CD4-positive, alpha-beta T cell (primary cell): ENCODE measurements at regions of chr19 and their contacts with region 1.

Region 1: DNA sequence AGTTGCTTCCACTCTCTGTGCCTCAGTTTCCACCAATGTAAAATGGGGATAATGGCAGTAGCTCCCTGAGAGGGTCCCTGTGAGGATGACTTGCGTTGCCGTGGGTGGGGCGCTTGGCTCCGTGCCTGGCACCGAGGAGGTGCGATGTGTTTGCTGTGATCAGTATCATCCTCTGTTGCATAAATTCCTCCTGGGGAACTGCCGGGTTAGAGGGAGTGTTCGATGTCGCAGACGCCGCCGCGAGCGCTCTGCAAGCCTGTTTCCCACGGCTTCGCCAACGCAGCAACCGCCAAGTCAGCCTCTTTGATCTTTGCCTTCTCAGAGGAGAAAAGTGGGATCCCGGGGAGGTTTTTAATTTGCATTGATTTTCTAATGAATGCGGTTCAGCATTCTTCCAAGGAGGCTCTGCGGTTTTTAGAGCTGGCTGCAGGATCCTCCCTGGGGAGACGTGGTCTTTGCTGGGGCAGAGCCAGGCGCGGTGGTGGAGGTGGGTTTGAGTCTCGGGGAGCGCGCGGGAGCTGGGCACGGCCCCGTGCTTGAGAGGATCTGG is 7.6 kb downstream of the GPR32 start:
- DNase-seq: no peak
- ATAC-seq: peak; percentile 44
- H3K4me3 ChIP-seq: no peak overlapping the region
- H3K4me3 Mint-ChIP-seq: no peak overlapping the region
- H3K27ac ChIP-seq: no peak overlapping the region
- H3K27ac Mint-ChIP-seq: no peak overlapping the region
- H3K4me1 ChIP-seq: peaks cover 6% of the 10 kb centered on the region
- H3K4me1 Mint-ChIP-seq: peaks cover 5% of the 10 kb centered on the region
- H3K27me3 ChIP-seq: peaks cover 50 to 72% of the 10 kb centered on the region in 2 experiments
- H3K27me3 Mint-ChIP-seq: peaks cover 87% of the 10 kb centered on the region
- CTCF ChIP-seq: no peak

Region 2: DNA sequence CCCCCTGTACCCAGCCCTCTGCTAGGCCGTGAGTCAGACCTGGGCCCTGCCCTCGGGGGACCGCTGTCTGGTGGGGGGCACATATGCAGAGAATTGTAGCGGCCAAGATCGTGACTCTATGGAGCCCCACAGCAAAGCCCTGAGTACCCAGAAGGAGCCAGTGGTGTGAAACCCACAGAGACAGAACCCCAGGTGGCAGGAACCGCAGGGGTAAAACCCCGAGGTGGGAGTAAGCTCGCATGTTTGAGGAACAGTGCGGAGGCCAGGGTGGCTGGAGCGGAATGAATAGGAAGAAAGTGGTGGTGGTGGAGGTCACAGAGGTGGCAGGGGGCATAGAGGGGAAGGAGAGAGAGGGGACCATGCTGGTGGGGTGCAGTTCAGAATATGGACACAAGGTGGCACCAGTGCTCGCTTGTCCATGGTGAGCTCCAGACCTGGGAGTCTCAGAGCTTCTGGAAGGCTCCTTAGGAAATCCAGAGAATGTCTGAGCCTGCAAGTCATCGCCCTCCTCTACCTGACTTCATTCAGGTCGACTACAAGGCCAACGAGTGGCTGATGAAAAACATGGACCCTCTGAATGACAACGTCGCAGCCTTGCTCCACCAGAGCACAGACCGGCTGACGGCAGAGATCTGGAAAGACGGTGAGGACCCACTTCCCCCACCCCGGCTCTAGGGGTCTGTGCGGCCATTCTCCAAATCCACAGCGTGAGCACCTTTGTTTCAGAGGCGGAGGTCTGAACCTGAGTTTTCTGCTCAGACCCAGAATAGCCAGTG is 525.5 kb before region 1 on chr19:
- CTCF ChIA-PET with region 1: no interaction called
- POLR2A ChIA-PET with region 1: no interaction called
- intact Hi-C with region 1: loop called in 1 of 2 experiments (anchors 5 kb)
- DNase-seq: peak in 12 of 14 experiments; percentile 2 to 50 (median 18)
- ATAC-seq: no peak
- H3K4me3 ChIP-seq: no peak overlapping the region
- H3K4me3 Mint-ChIP-seq: no peak overlapping the region
- H3K27ac ChIP-seq: no peak overlapping the region
- H3K27ac Mint-ChIP-seq: no peak overlapping the region
- H3K4me1 ChIP-seq: no peaks in the 10 kb centered on the region
- H3K4me1 Mint-ChIP-seq: no peaks in the 10 kb centered on the region
- H3K27me3 ChIP-seq: peaks cover 4 to 6% of the 10 kb centered on the region in 2 experiments
- H3K27me3 Mint-ChIP-seq: peaks cover 40% of the 10 kb centered on the region
- CTCF ChIP-seq: peak; percentile 57

Region 3: DNA sequence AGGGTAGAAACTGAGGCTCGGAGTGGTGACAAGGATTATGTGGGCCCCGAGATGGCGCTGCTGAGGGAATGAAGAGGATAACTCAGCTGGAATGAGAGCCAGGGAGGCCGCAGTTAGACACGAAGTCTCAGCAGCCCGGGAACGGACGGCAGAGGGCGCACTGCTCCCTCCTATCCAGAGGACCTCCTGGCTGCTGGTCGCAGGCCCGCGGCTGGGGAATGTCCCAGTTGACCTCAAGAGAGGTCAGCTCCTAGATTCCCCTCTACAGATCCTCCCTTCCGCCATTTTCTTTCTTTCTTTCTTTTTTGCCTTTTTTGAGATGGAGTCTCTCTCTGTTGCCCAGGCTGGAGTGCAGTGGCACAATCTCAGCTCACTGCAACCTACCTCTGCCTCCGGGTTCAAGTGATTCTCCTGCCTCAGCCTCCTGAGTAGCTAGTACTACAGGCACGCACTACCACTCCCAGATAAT is 240.0 kb before region 1 on chr19:
- CTCF ChIA-PET with region 1: interaction called, 3 read pairs
- POLR2A ChIA-PET with region 1: no interaction called
- intact Hi-C with region 1: loop called (anchors 1 kb)
- DNase-seq: peak; percentile 35 to 76 (median 50)
- ATAC-seq: peak; percentile 41
- H3K4me3 ChIP-seq: no peak overlapping the region
- H3K4me3 Mint-ChIP-seq: no peak overlapping the region
- H3K27ac ChIP-seq: no peak overlapping the region
- H3K27ac Mint-ChIP-seq: no peak overlapping the region
- H3K4me1 ChIP-seq: no peaks in the 10 kb centered on the region
- H3K4me1 Mint-ChIP-seq: no peaks in the 10 kb centered on the region
- H3K27me3 ChIP-seq: peaks cover 3 to 4% of the 10 kb centered on the region in 2 experiments
- H3K27me3 Mint-ChIP-seq: peaks cover 19% of the 10 kb centered on the region
- CTCF ChIP-seq: peak; percentile 76

Region 4: DNA sequence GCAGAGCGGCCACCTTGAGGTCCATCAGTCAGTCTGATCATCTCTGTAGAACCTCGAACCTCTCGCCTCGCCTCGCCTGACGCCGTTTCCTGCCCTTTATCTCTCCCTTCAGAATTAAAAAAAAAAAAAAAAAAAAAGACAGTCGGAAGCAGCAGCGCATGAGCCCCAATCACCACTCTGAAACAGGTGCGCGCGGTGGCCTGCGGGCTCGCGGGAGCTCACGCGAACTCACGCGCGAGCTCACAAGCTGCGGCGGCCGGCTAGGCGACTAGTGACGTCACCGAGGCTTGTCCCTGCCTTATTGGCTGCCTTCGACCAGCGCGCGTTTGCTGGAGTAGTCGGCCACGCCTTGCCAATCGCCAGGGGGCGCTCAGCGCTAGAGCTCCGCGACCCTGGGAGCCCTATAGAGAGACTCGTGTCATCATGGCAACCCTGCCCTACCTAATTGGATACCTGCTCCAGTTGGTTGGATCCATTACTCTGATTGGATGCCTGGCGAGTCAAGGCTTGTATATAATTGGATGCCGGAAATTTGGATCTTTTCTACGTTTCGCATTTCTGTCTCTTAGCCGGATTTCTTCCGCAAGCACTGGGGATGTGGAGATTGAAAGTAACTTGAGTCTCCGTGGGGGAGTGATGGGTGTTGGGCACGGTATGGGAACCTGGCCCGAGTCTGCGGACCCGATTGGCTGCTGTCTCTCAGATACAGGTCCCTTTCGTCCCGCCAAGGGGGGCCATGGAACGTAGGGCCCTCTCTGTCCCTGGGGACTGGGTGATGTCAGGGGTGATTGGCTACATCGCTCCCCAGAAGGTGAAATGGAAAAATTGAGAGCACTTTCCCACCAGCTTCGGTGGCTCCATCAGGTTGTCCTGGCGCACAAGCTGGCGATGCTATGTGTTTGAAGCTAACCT is 169.7 kb before region 1 on chr19:
- CTCF ChIA-PET with region 1: no interaction called
- POLR2A ChIA-PET with region 1: no interaction called
- intact Hi-C with region 1: loop called (anchors 2 kb)
- DNase-seq: peak; percentile 6 to 82 (median 58)
- ATAC-seq: peak; percentile 89
- H3K4me3 ChIP-seq: no peak overlapping the region
- H3K4me3 Mint-ChIP-seq: no peak overlapping the region
- H3K27ac ChIP-seq: no peak overlapping the region
- H3K27ac Mint-ChIP-seq: no peak overlapping the region
- H3K4me1 ChIP-seq: peaks cover 13% of the 10 kb centered on the region
- H3K4me1 Mint-ChIP-seq: peaks cover 10% of the 10 kb centered on the region
- H3K27me3 ChIP-seq: peaks cover 15% of the 10 kb centered on the region in 2 experiments
- H3K27me3 Mint-ChIP-seq: peaks cover 52% of the 10 kb centered on the region
- CTCF ChIP-seq: no peak

Region 5: DNA sequence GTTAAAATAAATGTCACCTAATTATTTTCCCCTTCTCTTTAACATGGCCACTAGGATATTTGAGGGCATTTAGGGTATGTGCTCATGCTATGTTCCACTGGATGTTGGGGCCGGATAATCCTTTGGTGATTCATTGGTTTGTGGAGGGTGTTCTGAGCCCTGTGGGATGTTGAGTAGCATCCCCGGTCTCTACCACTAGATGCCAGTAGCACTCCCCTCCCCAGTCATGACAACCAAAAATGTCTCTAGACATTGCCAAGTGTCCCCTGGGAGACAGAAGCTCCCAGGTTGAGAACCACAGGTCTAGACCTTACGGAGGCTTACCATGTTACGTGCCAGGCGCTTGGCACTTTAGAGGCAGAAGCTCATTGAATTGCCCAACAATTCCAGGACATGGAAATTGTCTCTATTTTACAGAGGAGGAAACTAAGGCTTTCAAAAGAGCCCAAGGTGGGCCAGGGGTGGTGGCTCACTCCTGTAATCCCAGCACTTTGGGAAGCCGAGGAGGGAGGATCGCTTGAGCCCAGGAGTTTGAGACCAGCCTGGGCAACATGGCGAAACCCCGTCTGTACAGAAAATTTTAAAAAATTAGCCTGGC is 72.3 kb before region 1 on chr19:
- CTCF ChIA-PET with region 1: no interaction called
- POLR2A ChIA-PET with region 1: no interaction called
- intact Hi-C with region 1: loop called (anchors 1 to 5 kb)
- DNase-seq: peak in 5 of 14 experiments; percentile 8 to 54 (median 34)
- ATAC-seq: peak; percentile 71
- H3K4me3 ChIP-seq: no peak overlapping the region
- H3K4me3 Mint-ChIP-seq: no peak overlapping the region
- H3K27ac ChIP-seq: no peak overlapping the region
- H3K27ac Mint-ChIP-seq: no peak overlapping the region
- H3K4me1 ChIP-seq: no peaks in the 10 kb centered on the region
- H3K4me1 Mint-ChIP-seq: no peaks in the 10 kb centered on the region
- H3K27me3 ChIP-seq: peaks cover 8 to 33% of the 10 kb centered on the region in 2 experiments
- H3K27me3 Mint-ChIP-seq: peaks cover 54% of the 10 kb centered on the region
- CTCF ChIP-seq: peak; percentile 42

Region 6: GRCh38 chr19:50724522-50725217 is 53.2 kb before region 1 on chr19:
- CTCF ChIA-PET with region 1: interaction called, 3 read pairs
- POLR2A ChIA-PET with region 1: no interaction called
- intact Hi-C with region 1: loop called (anchors 2 to 5 kb)
- DNase-seq: peak; percentile 75 to 97 (median 88)
- ATAC-seq: peak; percentile 84
- H3K4me3 ChIP-seq: peak overlapping the region; percentile 54
- H3K4me3 Mint-ChIP-seq: peak overlapping the region; percentile 87
- H3K27ac ChIP-seq: peak overlapping the region in 1 of 2 donors; percentile 41
- H3K27ac Mint-ChIP-seq: peak overlapping the region; percentile 70
- H3K4me1 ChIP-seq: peaks cover 34% of the 10 kb centered on the region
- H3K4me1 Mint-ChIP-seq: peaks cover 36% of the 10 kb centered on the region
- H3K27me3 ChIP-seq: peaks cover 59 to 66% of the 10 kb centered on the region in 2 experiments
- H3K27me3 Mint-ChIP-seq: peaks cover 52% of the 10 kb centered on the region
- CTCF ChIP-seq: peak; percentile 50

Region 7: DNA sequence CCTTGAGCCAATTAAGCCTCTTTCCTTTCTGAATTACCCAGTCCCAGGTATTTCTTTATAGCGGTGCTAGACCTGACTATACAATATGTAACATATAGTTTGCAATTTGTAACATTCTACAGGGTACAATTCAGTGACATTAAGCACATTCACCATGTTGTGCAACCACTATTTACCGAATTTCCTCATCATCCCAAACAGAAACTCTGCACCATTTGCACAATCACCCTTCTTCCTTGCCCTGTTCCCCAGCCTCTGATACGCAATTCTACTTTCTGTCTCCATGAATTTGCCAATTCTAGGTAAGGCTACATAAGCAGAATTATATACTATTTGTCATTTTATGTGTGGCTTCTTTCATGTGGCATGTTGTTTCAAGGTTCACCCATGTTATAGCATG is 653.3 kb after region 1 on chr19:
- CTCF ChIA-PET with region 1: no interaction called
- POLR2A ChIA-PET with region 1: no interaction called
- intact Hi-C with region 1: no loop called
- DNase-seq: peak in 2 of 14 experiments; percentile 47 to 50
- ATAC-seq: no peak
- H3K4me3 ChIP-seq: no peak overlapping the region
- H3K4me3 Mint-ChIP-seq: no peak overlapping the region
- H3K27ac ChIP-seq: no peak overlapping the region
- H3K27ac Mint-ChIP-seq: no peak overlapping the region
- H3K4me1 ChIP-seq: no peaks in the 10 kb centered on the region
- H3K4me1 Mint-ChIP-seq: no peaks in the 10 kb centered on the region
- H3K27me3 ChIP-seq: no peaks in the 10 kb centered on the region
- H3K27me3 Mint-ChIP-seq: no peaks in the 10 kb centered on the region
- CTCF ChIP-seq: no peak